ENCODE measurements at regions of chr11 and their contacts with region 1.

Region 1: DNA sequence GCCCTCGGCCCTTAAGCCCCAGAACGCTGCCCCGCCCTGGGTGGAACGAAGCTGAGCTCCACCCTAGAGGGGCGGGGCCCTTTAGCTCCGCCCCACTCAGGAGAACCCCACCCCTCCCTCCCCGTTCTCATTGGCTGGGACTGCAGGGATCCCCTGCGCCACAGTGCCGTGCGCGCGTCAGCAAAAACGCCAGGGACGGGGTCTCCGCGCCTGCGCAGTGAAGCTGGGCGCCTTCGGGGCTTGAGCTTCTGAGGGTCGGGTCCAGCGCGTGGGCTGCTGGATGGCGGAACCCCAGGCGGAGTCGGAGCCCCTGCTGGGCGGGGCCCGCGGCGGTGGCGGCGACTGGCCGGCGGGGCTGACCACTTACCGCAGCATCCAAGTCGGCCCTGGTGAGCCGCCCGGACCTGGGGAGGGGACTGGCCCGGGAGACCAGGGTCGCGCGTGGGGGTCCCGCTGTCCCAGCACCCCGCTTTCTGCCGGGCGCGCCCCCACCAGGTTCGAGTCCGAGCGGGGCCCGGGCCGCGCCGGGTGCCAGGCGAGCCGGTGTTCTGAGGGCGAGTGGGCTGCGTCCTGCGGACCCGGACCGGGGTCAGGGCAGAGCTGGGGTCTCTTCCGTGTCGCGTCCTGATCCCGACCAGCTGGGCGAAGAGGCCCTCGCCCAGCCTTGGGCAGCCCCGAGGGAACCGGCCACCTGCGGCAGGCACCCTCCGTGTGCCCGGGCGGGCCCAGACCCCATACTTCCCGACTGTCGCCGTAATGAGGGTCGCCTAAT is at the start of gene TPCN2:
- DNase-seq: peak; percentile 92 to 97 (median 96)
- H3K4me3 ChIP-seq: peak within 1 kb of the TSS; percentile 79 to 93 (median 85)
- H3K4me3 Mint-ChIP-seq: peak within 1 kb of the TSS; percentile 81 to 88
- H3K27ac ChIP-seq: peak within 1 kb of the TSS; percentile 79 to 98
- H3K27ac Mint-ChIP-seq: peak within 1 kb of the TSS; percentile 89 to 96 (median 94)
- H3K4me1 ChIP-seq: peaks cover 56 to 75% of the 10 kb centered on the region in 2 donors
- H3K4me1 Mint-ChIP-seq: peaks cover 72% of the 10 kb centered on the region
- H3K27me3 ChIP-seq: no peaks in the 10 kb centered on the region
- H3K27me3 Mint-ChIP-seq: peaks cover 0 to 5% (median 2%) of the 10 kb centered on the region in 3 donors
- CTCF ChIP-seq: no peak
- polyA plus RNA-seq, gene TPCN2: 29.3 to 52.8 (median 31.5) TPM

Region 2: GRCh38 chr11:69080257-69080995 is 31.5 kb after region 1 on chr11:
- intact Hi-C with region 1: loop called (anchors 1 to 5 kb)
- DNase-seq: peak; percentile 89 to 94 (median 90)
- H3K4me3 ChIP-seq: peak overlapping the region in 1 of 3 experiments; percentile 46
- H3K4me3 Mint-ChIP-seq: peak overlapping the region; percentile 58 to 70
- H3K27ac ChIP-seq: peak overlapping the region; percentile 86 to 95
- H3K27ac Mint-ChIP-seq: peak overlapping the region; percentile 95 to 99 (median 97)
- H3K4me1 ChIP-seq: peaks cover 32 to 36% of the 10 kb centered on the region in 2 donors
- H3K4me1 Mint-ChIP-seq: peaks cover 35% of the 10 kb centered on the region
- H3K27me3 ChIP-seq: no peaks in the 10 kb centered on the region
- H3K27me3 Mint-ChIP-seq: no peaks in the 10 kb centered on the region
- CTCF ChIP-seq: no peak